Activated T-helper 1 cell treated with anti-CD3 and anti-CD28 coated beads, Interleukin-12 subunit alpha, Interleukin-12 subunit beta, Interleukin-2, Interleukin-4 antibody, amounts not matched to agents 30 ng/mL and 10 ng/mL and 1 ng/mL, durations not matched to agents 14 hours and 24 hours and 36 hours (primary cell): ENCODE measurements at regions of chr19 and their contacts with region 1.

Region 1: GRCh38 chr19:6372594-6373095 is at the start of gene ALKBH7:
- DNase-seq: peak; percentile 95
- H3K4me3 Mint-ChIP-seq: peak within 1 kb of the TSS; percentile 81
- H3K27ac Mint-ChIP-seq: peak within 1 kb of the TSS; percentile 81
- H3K4me1 Mint-ChIP-seq: peaks cover 11% of the 10 kb centered on the region
- H3K27me3 Mint-ChIP-seq: no peaks in the 10 kb centered on the region
- total RNA-seq, gene ALKBH7: 24.8 and 27.1 TPM in 2 replicates

Region 2: GRCh38 chr19:6110360-6110977 is 262.2 kb before region 1 on chr19 and contains the start of gene RFX2:
- intact Hi-C with region 1: loop called (anchors 2 kb)
- DNase-seq: peak; percentile 99
- H3K4me3 Mint-ChIP-seq: peak within 1 kb of the TSS; percentile 86
- H3K27ac Mint-ChIP-seq: peak within 1 kb of the TSS; percentile 79
- H3K4me1 Mint-ChIP-seq: peaks cover 27% of the 10 kb centered on the region
- H3K27me3 Mint-ChIP-seq: peaks cover 17% of the 10 kb centered on the region
- total RNA-seq, gene RFX2: 9.2 and 10.2 TPM in 2 replicates

Region 3: DNA sequence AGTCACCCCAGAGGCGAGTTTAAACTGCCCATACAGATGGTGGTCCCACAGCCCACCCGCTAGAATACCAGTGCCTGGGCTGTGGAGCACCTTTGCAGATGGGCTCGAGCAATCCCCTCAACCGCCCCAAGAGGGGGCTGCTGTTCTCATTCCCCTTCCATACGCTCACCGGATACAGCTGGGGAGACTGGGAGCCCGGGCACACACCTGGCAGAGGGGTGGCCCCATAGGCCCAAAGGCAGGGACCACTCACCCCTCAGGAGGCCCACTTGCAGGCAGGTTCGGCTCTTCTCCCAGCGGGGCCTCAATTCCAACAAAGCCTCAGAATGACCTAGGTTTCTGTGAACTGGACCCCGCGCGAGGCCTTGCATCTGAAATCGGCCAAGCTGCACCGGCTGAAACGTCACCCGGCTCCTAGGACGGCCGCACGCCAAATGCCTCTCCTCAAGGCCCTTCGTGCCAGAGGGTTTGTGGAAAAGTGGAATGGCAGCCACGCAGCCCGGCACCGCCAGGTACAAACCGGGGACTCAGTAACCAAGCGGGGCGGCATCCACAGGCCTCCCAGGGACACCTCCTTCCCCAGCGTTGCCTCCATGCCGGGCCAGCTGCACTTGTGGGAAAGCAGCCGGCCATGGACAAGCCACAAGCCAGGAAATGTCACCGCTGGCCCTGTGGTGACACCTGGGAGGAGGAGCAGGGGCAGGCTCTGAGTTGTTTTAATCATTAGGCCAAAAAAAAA is 111.6 kb before region 1 on chr19:
- intact Hi-C with region 1: no loop called
- DNase-seq: peak; percentile 8
- H3K4me3 Mint-ChIP-seq: no peak overlapping the region
- H3K27ac Mint-ChIP-seq: no peak overlapping the region
- H3K4me1 Mint-ChIP-seq: no peaks in the 10 kb centered on the region
- H3K27me3 Mint-ChIP-seq: no peaks in the 10 kb centered on the region

Region 4: GRCh38 chr19:6362027-6362350 is 10.7 kb before region 1 on chr19:
- intact Hi-C with region 1: loop called (anchors 1 kb)
- DNase-seq: no peak
- H3K4me3 Mint-ChIP-seq: peak overlapping the region; percentile 98
- H3K27ac Mint-ChIP-seq: peak overlapping the region; percentile 96
- H3K4me1 Mint-ChIP-seq: peaks cover 13% of the 10 kb centered on the region
- H3K27me3 Mint-ChIP-seq: no peaks in the 10 kb centered on the region

Region 5: GRCh38 chr19:6476155-6476895 is 103.7 kb after region 1 on chr19:
- intact Hi-C with region 1: loop called (anchors 1 kb)
- DNase-seq: peak; percentile 50
- H3K4me3 Mint-ChIP-seq: no peak overlapping the region
- H3K27ac Mint-ChIP-seq: no peak overlapping the region
- H3K4me1 Mint-ChIP-seq: peaks cover 14% of the 10 kb centered on the region
- H3K27me3 Mint-ChIP-seq: no peaks in the 10 kb centered on the region

Region 6: DNA sequence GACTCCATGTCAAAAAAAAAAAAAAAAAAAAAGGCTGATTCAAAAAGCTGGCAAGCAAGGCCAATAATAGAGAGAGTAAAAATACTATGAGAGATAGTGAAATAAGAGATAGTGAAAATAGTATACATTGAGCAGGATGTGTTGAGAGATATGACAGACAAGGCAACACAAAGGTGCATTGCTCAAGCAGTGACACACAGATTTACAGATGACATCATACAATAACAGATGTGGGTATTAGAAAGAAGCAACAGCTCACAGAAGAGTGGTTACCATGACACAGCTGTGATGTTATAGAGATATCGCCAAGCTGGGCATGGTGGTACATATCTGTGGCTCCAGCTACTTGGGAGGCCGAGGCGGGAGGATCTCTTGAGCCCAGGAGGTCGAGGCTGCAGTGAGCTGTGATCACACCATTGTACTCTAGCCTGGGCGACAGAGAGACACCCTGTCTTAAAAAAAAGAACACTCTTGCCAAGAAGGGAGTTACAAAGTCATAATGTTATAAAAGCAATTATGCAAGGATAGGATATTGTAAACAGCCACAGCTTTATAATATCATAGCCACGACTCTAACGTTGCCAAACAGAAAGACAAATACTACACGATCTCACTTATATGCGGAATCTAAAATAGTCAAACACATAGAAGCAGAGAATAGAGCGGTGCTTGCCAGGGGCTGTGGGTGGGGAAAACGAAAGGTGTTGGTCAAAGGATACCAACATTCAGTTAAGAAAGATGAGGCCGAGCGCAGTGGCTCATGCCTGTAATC is 168.5 kb after region 1 on chr19:
- intact Hi-C with region 1: no loop called
- DNase-seq: no peak
- H3K4me3 Mint-ChIP-seq: no peak overlapping the region
- H3K27ac Mint-ChIP-seq: no peak overlapping the region
- H3K4me1 Mint-ChIP-seq: peaks cover 17% of the 10 kb centered on the region
- H3K27me3 Mint-ChIP-seq: peaks cover 1% of the 10 kb centered on the region